ENCODE measurements at regions of chr17 and their contacts with region 1.

Region 1: DNA sequence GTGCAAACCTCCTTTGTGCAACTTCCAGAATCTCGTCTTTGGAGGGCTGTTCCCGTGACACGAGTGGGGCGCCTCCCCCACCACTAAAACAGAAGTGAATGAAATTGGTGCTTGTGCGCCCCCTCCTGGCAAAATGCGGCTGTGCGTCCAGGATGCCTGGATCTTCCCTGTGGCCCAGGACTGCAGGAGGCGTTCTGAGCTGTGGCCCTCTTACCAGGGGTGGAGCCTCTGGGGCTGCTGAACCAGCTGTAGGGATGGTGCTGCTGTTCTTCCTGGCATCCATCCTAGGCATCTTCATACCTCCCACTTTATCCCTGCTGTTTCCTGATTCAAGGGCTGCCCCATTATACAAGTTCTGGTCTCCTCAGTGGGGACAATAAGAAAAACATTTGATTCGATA is 18.5 kb upstream of the NAGLU start:
- DNase-seq: peak; percentile 94
- H3K4me3 ChIP-seq: no peak overlapping the region
- H3K27ac ChIP-seq: peak overlapping the region in 7 of 8 donors; percentile 73 to 91 (median 86)
- H3K4me1 ChIP-seq: peaks cover 34 to 75% (median 66%) of the 10 kb centered on the region in 6 donors
- H3K27me3 ChIP-seq: no peaks in the 10 kb centered on the region
- CTCF ChIP-seq: peak; percentile 94 to 99 (median 97)
- POLR2A ChIP-seq: no peak

Region 2: GRCh38 chr17:42322382-42323267 is 194.9 kb before region 1 on chr17:
- intact Hi-C with region 1: loop called (anchors 5 kb)
- DNase-seq: peak; percentile 97
- H3K4me3 ChIP-seq: no peak overlapping the region
- H3K27ac ChIP-seq: peak overlapping the region in 6 of 8 donors; percentile 18 to 70 (median 34)
- H3K4me1 ChIP-seq: peaks cover 27 to 64% (median 43%) of the 10 kb centered on the region in 6 donors
- H3K27me3 ChIP-seq: no peaks in the 10 kb centered on the region
- CTCF ChIP-seq: peak; percentile 98 to 100 (median 99)
- POLR2A ChIP-seq: no peak

Region 3: GRCh38 chr17:42431758-42432211 is 85.7 kb before region 1 on chr17:
- intact Hi-C with region 1: loop called (anchors 5 kb)
- DNase-seq: no peak
- H3K4me3 ChIP-seq: no peak overlapping the region
- H3K27ac ChIP-seq: peak overlapping the region in 4 of 8 donors; percentile 7 to 56 (median 36)
- H3K4me1 ChIP-seq: peaks cover 0 to 36% (median 13%) of the 10 kb centered on the region in 6 donors
- H3K27me3 ChIP-seq: peaks cover 0 to 4% (median 0%) of the 10 kb centered on the region in 7 donors
- CTCF ChIP-seq: no peak
- POLR2A ChIP-seq: no peak

Region 4: GRCh38 chr17:42459801-42460281 is 57.7 kb before region 1 on chr17:
- intact Hi-C with region 1: loop called (anchors 10 kb)
- DNase-seq: no peak
- H3K4me3 ChIP-seq: peak overlapping the region; percentile 39 to 76 (median 56)
- H3K27ac ChIP-seq: peak overlapping the region; percentile 74 to 96 (median 92)
- H3K4me1 ChIP-seq: peaks cover 36 to 97% (median 59%) of the 10 kb centered on the region in 6 donors
- H3K27me3 ChIP-seq: no peaks in the 10 kb centered on the region
- CTCF ChIP-seq: no peak
- POLR2A ChIP-seq: no peak

Region 5: GRCh38 chr17:43576563-43577229 is 1059.2 kb after region 1 on chr17:
- intact Hi-C with region 1: no loop called
- DNase-seq: peak; percentile 87
- H3K4me3 ChIP-seq: no peak overlapping the region
- H3K27ac ChIP-seq: peak overlapping the region in 2 of 8 donors; percentile 71 to 81
- H3K4me1 ChIP-seq: peaks cover 19 to 53% (median 44%) of the 10 kb centered on the region in 6 donors
- H3K27me3 ChIP-seq: peaks cover 0 to 11% (median 0%) of the 10 kb centered on the region in 7 donors
- CTCF ChIP-seq: peak; percentile 69 to 91 (median 86)
- POLR2A ChIP-seq: no peak